Caco-2 (cell line): ENCODE measurements at regions of chr3 and their contacts with region 1.

Region 1: DNA sequence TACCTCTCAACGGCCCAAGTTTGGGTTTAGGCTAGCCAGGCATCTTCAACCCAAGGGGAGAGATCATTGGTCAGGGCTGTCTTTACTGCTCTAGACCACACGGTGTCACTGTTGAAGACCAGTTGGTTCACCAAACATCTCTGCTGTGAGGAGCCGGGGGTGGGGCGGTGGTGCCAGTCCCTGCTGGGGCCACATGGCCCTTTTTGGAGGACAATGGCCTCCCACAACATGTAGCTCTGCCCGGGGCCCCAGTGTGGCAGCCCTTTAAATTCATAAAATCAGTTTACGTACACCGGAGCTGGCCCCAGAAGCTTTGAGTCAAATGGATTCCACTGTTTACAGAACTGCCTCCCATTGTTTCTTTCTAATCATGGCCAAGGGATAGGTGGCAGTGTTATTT is 19.1 kb upstream of the TM4SF18 start:
- DNase-seq: peak; percentile 74 to 76
- H3K4me3 ChIP-seq: no peak overlapping the region
- H3K4me3 Mint-ChIP-seq: no peak overlapping the region
- H3K27ac Mint-ChIP-seq: no peak overlapping the region
- H3K4me1 ChIP-seq: peaks cover 22% of the 10 kb centered on the region
- H3K4me1 Mint-ChIP-seq: peaks cover 29% of the 10 kb centered on the region
- H3K27me3 ChIP-seq: no peaks in the 10 kb centered on the region
- H3K27me3 Mint-ChIP-seq: no peaks in the 10 kb centered on the region
- CTCF ChIP-seq: peak; percentile 72 to 73

Region 2: DNA sequence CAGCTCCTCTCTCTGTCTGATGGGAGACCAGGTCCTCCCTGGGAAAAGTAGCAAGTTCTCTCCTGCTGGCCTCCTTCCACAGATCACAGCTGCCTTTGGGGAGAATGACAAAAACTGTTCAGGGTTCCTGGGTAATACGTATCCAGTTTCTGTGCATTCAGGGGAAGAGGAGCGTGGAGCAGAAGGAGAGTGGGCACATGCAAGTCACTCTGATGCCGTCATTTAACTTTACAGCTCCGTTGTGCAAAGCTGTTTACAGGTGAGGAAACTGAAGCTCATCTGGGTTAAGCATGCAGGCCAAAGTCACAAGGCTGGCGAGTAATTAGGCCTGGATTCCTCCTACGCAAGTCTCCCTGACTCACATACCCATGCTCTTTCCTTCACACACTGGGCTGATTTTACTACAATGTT is 32.4 kb after region 1 on chr3:
- CTCF ChIA-PET with region 1: no interaction called
- POLR2A ChIA-PET with region 1: no interaction called
- intact Hi-C with region 1: loop called (anchors 1 kb)
- DNase-seq: peak in 1 of 2 experiments; percentile 53
- H3K4me3 ChIP-seq: no peak overlapping the region
- H3K4me3 Mint-ChIP-seq: peak overlapping the region; percentile 57
- H3K27ac Mint-ChIP-seq: peak overlapping the region; percentile 95
- H3K4me1 ChIP-seq: peaks cover 81% of the 10 kb centered on the region
- H3K4me1 Mint-ChIP-seq: peaks cover 60% of the 10 kb centered on the region
- H3K27me3 ChIP-seq: no peaks in the 10 kb centered on the region
- H3K27me3 Mint-ChIP-seq: no peaks in the 10 kb centered on the region
- CTCF ChIP-seq: no peak

Region 3: DNA sequence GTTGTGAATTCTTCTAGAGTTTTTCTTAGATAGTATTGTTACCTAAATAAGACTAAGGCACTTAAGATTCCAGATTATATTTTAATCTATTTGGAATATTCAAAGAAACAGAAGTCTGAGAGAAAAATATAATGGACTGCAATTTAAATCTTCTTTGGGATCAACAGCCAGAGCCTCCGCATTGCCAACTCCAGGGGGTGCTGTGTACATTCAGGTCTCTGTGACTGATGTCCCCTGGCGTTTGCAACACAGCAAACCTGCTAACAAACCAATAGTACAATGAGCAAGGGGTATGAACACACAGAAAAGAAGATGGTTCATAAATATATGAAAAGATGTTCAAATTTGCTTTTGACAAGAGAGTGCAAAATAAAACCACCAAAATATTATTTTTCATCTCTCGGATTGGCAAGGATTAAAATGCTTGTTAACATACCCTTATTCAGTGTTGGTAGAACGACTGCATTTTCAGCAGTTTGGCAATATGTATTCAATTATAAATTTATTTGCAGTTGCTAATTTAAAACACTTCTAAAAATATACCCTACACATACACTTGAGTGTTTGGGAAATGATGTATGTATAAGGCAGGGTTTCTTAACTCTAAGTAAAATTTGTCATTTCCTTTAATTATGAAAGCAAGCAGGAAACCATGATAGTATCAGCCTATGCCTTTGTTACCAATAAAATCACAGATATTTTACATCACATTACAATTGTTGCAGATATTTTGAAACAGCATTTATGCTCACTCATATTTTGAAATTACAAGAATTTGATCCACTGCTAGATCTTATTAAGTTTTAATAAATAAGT is 41.0 kb after region 1 on chr3:
- CTCF ChIA-PET with region 1: no interaction called
- POLR2A ChIA-PET with region 1: no interaction called
- intact Hi-C with region 1: loop called (anchors 1 kb)
- DNase-seq: peak; percentile 76 to 82
- H3K4me3 ChIP-seq: no peak overlapping the region
- H3K4me3 Mint-ChIP-seq: no peak overlapping the region
- H3K27ac Mint-ChIP-seq: no peak overlapping the region
- H3K4me1 ChIP-seq: peaks cover 17% of the 10 kb centered on the region
- H3K4me1 Mint-ChIP-seq: peaks cover 29% of the 10 kb centered on the region
- H3K27me3 ChIP-seq: no peaks in the 10 kb centered on the region
- H3K27me3 Mint-ChIP-seq: no peaks in the 10 kb centered on the region
- CTCF ChIP-seq: peak; percentile 90 to 97

Region 4: GRCh38 chr3:149489060-149489690 is 136.6 kb after region 1 on chr3:
- CTCF ChIA-PET with region 1: interaction called, 4 read pairs
- POLR2A ChIA-PET with region 1: no interaction called
- intact Hi-C with region 1: loop called (anchors 1 kb)
- DNase-seq: peak in 1 of 2 experiments; percentile 29
- H3K4me3 ChIP-seq: no peak overlapping the region
- H3K4me3 Mint-ChIP-seq: no peak overlapping the region
- H3K27ac Mint-ChIP-seq: no peak overlapping the region
- H3K4me1 ChIP-seq: no peaks in the 10 kb centered on the region
- H3K4me1 Mint-ChIP-seq: no peaks in the 10 kb centered on the region
- H3K27me3 ChIP-seq: no peaks in the 10 kb centered on the region
- H3K27me3 Mint-ChIP-seq: no peaks in the 10 kb centered on the region
- CTCF ChIP-seq: peak; percentile 38 to 57